Aorta (tissue), 5 donors: ENCODE measurements at regions of chr15 and their contacts with region 1.

Region 1: GRCh38 chr15:101127506-101128076 is 124.3 kb downstream of the CHSY1 start:
- DNase-seq: peak; percentile 91
- ATAC-seq: peak; percentile 93
- H3K4me3 ChIP-seq: no peak overlapping the region
- H3K27ac ChIP-seq: peak overlapping the region; percentile 89 to 97
- H3K4me1 ChIP-seq: no peaks in the 10 kb centered on the region
- H3K27me3 ChIP-seq: no peaks in the 10 kb centered on the region

Region 2: GRCh38 chr15:101070502-101071273 is 56.9 kb before region 1 on chr15:
- intact Hi-C with region 1: no loop called
- DNase-seq: peak in 1 of 2 donors; percentile 69
- ATAC-seq: peak; percentile 84
- H3K4me3 ChIP-seq: no peak overlapping the region
- H3K27ac ChIP-seq: peak overlapping the region in 1 of 2 donors; percentile 58
- H3K4me1 ChIP-seq: no peaks in the 10 kb centered on the region
- H3K27me3 ChIP-seq: no peaks in the 10 kb centered on the region

Region 3: DNA sequence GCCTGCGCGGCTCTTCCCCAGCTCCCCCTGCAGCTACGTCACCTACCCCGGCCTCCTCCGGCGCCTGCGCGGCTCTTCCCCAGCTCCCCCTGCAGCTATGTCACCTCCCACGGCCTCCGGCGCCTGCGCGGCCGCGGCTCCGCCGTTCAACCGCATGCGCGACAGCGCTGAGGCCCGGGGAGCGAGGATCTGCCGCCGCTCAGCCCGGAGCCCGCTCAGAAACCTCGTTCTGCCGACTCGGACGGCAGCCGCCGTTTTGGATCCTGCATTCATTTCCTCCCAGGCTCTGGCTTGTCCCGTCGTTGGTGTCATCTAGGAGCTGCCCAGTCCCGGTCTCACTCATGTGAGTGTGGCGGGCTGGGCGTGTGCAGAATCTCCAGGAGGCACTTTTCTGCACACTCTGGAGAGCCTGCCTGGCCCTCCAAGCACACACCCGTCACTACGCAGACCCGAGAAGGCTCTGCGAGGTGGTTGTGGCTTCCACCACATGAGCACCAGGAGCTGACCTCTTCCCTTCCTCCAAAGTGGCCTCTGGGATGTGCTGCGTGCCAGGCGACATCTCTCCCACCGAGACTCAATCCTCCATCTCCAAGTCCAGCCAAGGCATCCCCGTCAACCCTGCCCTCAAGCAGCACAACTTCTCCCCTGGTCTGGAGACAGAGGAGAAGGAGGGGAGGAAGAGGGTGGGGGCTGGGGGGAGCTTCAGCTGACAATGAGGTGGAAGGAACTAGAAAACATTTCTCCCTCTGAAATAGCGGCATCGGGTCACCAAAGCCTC is 41.0 kb before region 1 on chr15:
- intact Hi-C with region 1: no loop called
- DNase-seq: peak in 1 of 2 donors; percentile 72
- ATAC-seq: no peak
- H3K4me3 ChIP-seq: no peak overlapping the region
- H3K27ac ChIP-seq: no peak overlapping the region
- H3K4me1 ChIP-seq: no peaks in the 10 kb centered on the region
- H3K27me3 ChIP-seq: no peaks in the 10 kb centered on the region

Region 4: DNA sequence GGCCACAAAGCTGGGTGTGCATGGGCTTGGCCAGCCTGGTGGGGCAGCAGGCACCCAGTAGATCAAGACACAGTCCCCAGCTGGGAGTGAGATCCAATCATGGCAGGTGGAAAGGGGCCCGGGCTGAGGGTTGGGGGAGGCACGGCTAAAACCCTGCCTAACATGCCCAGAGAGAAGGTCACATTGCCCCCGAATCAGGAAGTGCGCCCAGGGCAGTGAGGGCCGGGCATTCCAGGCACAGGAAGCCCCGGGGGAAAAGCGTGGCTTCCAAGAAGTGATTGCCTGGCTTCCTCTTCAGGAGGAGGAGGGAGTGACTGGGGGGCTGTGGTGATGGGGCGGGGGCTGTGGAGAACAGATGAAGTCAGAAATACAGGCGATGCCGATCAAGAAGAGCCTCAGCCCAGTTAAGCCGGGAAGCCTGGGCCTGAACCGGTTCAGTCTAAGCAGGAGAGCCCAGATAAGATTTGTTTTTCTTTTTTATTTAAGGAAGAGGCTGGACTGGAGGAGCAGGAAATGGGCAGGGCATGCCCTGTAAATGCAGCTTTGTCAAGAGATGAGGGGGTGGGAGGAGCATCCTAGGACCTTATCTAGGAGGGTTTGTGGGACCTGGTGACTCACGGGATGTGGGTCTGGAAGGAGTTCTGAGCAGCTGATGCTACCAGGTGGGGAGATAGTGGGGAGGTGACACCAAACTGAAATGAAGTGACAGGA is 40.3 kb after region 1 on chr15:
- intact Hi-C with region 1: loop called (anchors 1 to 5 kb)
- DNase-seq: peak; percentile 93 to 94
- ATAC-seq: peak; percentile 84
- H3K4me3 ChIP-seq: no peak overlapping the region
- H3K27ac ChIP-seq: peak overlapping the region; percentile 47 to 86
- H3K4me1 ChIP-seq: peaks cover 3 to 4% of the 10 kb centered on the region in 2 donors
- H3K27me3 ChIP-seq: no peaks in the 10 kb centered on the region